Gastrocnemius medialis (tissue), 4 donors: ENCODE measurements at regions of chr19 and their contacts with region 1.

Region 1: GRCh38 chr19:49877020-49877878 is at the starts of genes AKT1S1 and TBC1D17:
- DNase-seq: peak; percentile 100
- ATAC-seq: peak; percentile 85 to 87
- H3K4me3 ChIP-seq: peak within 1 kb of the TSS; percentile 91 to 95 (median 92)
- H3K27ac ChIP-seq: peak within 1 kb of the TSS; percentile 91 to 100 (median 99)
- H3K4me1 ChIP-seq: peaks cover 30 to 35% of the 10 kb centered on the region in 2 donors
- H3K27me3 ChIP-seq: no peaks in the 10 kb centered on the region
- CTCF ChIP-seq: no peak
- POLR2A ChIP-seq: peak; percentile 91 to 94
- total RNA-seq, gene AKT1S1: 23.8 to 56.8 (median 43.4) TPM
- total RNA-seq, gene TBC1D17: 48.7 to 84.3 (median 66.4) TPM

Region 2: DNA sequence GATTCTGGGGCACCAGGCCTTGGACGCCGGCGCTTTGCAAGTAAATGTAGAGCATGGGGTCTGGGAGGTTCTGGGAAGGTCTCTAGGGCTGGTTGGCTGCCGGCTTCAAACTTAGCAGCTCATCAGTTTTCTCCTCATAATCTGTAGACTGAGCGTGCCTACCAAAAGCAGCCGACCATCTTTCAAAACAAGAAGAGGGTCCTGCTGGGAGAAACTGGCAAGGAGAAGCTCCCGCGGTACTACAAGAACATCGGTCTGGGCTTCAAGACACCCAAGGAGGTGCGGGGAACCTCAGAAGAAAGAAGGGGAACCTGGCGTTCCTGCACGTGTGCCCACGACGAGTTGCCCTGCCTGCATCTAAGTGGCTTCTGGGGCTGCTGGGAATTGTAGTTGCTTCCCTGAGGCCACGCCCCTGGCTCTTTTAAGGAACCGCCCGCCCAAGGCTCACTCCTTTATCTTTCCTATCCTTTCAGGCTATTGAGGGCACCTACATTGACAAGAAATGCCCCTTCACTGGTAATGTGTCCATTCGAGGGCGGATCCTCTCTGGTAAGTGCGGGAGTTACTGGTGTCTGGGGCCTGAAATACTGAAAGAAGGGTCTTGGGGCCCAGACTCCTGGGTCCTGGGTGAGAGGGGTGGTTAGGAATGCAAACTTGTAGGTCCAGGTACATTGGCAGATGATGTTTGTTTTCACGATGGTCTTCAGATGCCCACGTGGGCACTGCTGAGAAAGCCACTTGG is 380.0 kb before region 1 on chr19:
- in situ Hi-C with region 1: no loop called
- intact Hi-C with region 1: loop called (anchors 5 kb)
- DNase-seq: peak; percentile 48 to 63
- ATAC-seq: no peak
- H3K4me3 ChIP-seq: peak overlapping the region; percentile 79 to 96 (median 90)
- H3K27ac ChIP-seq: peak overlapping the region; percentile 93 to 98 (median 96)
- H3K4me1 ChIP-seq: peaks cover 27 to 31% of the 10 kb centered on the region in 2 donors
- H3K27me3 ChIP-seq: no peaks in the 10 kb centered on the region
- CTCF ChIP-seq: no peak
- POLR2A ChIP-seq: peak; percentile 24 to 62

Region 3: GRCh38 chr19:49766007-49766937 is 111.0 kb before region 1 on chr19:
- in situ Hi-C with region 1: no loop called
- intact Hi-C with region 1: loop called (anchors 1 kb)
- DNase-seq: peak; percentile 100
- ATAC-seq: peak; percentile 87 to 92
- H3K4me3 ChIP-seq: peak overlapping the region; percentile 48 to 97 (median 74)
- H3K27ac ChIP-seq: peak overlapping the region; percentile 91 to 98 (median 96)
- H3K4me1 ChIP-seq: peaks cover 19 to 22% of the 10 kb centered on the region in 2 donors
- H3K27me3 ChIP-seq: no peaks in the 10 kb centered on the region
- CTCF ChIP-seq: no peak
- POLR2A ChIP-seq: peak; percentile 71 to 75

Region 4: GRCh38 chr19:49817964-49818648 is 59.1 kb before region 1 on chr19 and contains the start of gene MED25:
- in situ Hi-C with region 1: loop called in 2 of 4 experiments (anchors 10 kb)
- intact Hi-C with region 1: loop called (anchors 1 kb)
- DNase-seq: peak; percentile 73 to 83
- ATAC-seq: peak; percentile 71 to 72
- H3K4me3 ChIP-seq: peak within 1 kb of the TSS; percentile 78 to 96 (median 86)
- H3K27ac ChIP-seq: peak within 1 kb of the TSS; percentile 94 to 99 (median 97)
- H3K4me1 ChIP-seq: peaks cover 17 to 23% of the 10 kb centered on the region in 2 donors
- H3K27me3 ChIP-seq: no peaks in the 10 kb centered on the region
- CTCF ChIP-seq: peak in 3 of 5 experiments; percentile 35 to 65 (median 54)
- POLR2A ChIP-seq: peak; percentile 90 to 97
- total RNA-seq, gene MED25: 46.6 to 105 (median 78.7) TPM

Region 5: DNA sequence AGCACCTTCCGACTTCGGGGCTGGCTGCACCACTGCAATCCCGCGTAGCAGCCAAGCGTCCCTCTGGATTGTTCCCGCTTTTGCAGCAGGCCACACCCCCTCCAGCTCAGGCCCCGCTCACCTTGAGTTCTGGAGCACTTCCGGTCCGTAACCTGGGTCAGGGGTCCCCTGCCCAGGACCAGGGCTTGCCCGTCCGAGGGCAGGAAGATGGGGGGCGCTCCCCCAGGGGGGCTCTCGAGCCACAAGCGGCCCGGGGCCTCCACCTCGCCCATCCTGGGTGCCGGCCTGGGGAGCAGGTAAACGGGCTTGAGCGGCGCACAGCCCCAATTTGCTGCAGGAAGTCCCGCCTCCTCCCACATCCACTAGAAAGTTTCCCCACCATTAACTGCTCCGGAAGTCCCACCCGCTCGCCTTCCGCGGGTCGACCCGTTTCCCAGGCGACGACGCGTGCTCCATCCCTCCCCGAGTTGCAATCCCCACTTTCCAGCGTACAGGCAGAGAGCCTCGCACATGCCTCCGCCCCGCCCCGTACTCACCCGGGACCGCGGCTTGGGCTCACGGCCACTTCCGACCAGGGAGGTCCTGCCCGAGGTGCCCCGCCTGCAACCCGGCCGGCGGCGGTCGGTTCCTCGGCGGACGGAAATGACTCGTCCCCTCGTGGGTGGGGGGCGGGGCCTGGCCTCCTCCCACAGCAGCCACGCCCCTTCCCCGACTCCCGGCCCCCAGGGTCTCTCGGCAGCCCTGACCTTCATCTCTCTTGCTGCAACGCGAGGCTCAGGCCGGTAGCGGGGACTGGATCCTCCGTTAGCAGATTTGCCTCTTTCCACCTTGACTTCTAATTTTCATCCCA is 10.1 kb before region 1 on chr19 and contains the start of gene PNKP:
- in situ Hi-C with region 1: no loop called
- intact Hi-C with region 1: loop called (anchors 1 kb)
- DNase-seq: peak; percentile 83 to 84
- ATAC-seq: peak; percentile 66 to 69
- H3K4me3 ChIP-seq: peak within 1 kb of the TSS; percentile 73 to 99 (median 88)
- H3K27ac ChIP-seq: peak within 1 kb of the TSS; percentile 96 to 99 (median 98)
- H3K4me1 ChIP-seq: peaks cover 45 to 47% of the 10 kb centered on the region in 2 donors
- H3K27me3 ChIP-seq: no peaks in the 10 kb centered on the region
- CTCF ChIP-seq: no peak
- POLR2A ChIP-seq: peak; percentile 69 to 72
- total RNA-seq, gene PNKP: 14.9 to 43.4 (median 21.1) TPM

Region 6: GRCh38 chr19:49954079-49954829 is 77.0 kb after region 1 on chr19:
- in situ Hi-C with region 1: no loop called
- intact Hi-C with region 1: no loop called
- DNase-seq: no peak
- ATAC-seq: no peak
- H3K4me3 ChIP-seq: no peak overlapping the region
- H3K27ac ChIP-seq: no peak overlapping the region
- H3K4me1 ChIP-seq: no peaks in the 10 kb centered on the region
- H3K27me3 ChIP-seq: peaks cover 0 to 7% (median 0%) of the 10 kb centered on the region in 3 donors
- CTCF ChIP-seq: no peak
- POLR2A ChIP-seq: no peak

Region 7: DNA sequence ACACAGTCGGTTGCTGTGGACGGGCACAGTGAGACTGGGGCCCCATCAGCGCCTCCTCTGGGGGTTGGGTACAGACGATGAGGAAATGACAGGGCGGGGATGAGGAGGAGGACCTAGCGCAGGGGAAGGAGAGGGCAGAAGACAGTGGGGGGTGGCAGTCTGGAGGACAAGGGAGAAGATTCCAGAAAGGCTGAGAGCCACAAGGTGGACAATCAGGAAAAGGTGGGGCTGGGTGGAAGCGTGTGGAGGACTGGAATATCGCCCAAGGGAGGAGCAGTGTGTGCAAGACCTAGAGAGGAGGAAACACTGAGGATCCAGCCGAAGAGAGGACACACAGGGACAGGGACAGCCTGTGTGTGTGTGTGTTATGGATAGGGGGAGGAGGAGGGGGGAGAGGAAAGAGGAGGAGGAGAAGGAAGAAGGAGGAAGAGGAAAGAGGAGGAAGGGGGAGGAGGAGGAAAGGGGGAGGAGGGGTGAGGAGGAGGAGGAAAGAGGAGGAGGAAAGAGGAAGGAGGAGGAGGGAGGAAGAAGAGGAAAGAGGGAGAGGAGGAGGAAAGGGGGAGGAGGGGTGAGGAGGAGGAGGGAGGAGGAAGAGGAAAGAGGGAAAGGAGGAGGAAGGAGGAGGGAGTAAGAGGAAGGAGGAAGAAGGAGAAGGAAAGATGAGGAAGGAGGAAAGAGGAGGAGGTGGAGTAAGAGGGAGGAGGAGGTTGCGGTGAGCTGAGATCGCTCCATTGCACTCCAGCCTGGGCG is 615.2 kb after region 1 on chr19:
- in situ Hi-C with region 1: no loop called
- intact Hi-C with region 1: loop called (anchors 5 kb)
- DNase-seq: peak in 1 of 2 donors; percentile 64
- ATAC-seq: peak in 1 of 2 donors; percentile 29
- H3K4me3 ChIP-seq: peak overlapping the region in 1 of 4 donors; percentile 17
- H3K27ac ChIP-seq: peak overlapping the region; percentile 69 to 97 (median 84)
- H3K4me1 ChIP-seq: peaks cover 10 to 13% of the 10 kb centered on the region in 2 donors
- H3K27me3 ChIP-seq: no peaks in the 10 kb centered on the region
- CTCF ChIP-seq: no peak
- POLR2A ChIP-seq: peak; percentile 28 to 68